ENCODE measurements at regions of chr16 and their contacts with region 1.

Region 1: GRCh38 chr16:67928561-67929364 is 2.9 kb downstream of the CTRL start:
- DNase-seq: peak in 1 of 2 experiments; percentile 91
- H3K4me3 ChIP-seq: no peak overlapping the region
- H3K27ac ChIP-seq: no peak overlapping the region
- H3K4me1 ChIP-seq: peaks cover 0 to 8% (median 4%) of the 10 kb centered on the region in 4 experiments; a peak in 5 of 7 replicates
- H3K27me3 ChIP-seq: no peaks in the 10 kb centered on the region
- CTCF ChIP-seq: peak; percentile 96 to 100 (median 96)
- EP300 ChIP-seq: no peak
- POLR2A ChIP-seq: no peak
- RAD21 ChIP-seq: peak; percentile 94

Region 2: GRCh38 chr16:67910158-67910557 is 18.6 kb before region 1 on chr16:
- CTCF ChIA-PET with region 1: interaction called, 74 read pairs
- POLR2A ChIA-PET with region 1: interaction called, 4 read pairs
- DNase-seq: no peak
- H3K4me3 ChIP-seq: no peak overlapping the region
- H3K27ac ChIP-seq: no peak overlapping the region
- H3K4me1 ChIP-seq: peaks cover 0 to 6% (median 3%) of the 10 kb centered on the region in 4 experiments; a peak in 4 of 7 replicates
- H3K27me3 ChIP-seq: no peaks in the 10 kb centered on the region
- CTCF ChIP-seq: no peak
- EP300 ChIP-seq: no peak
- POLR2A ChIP-seq: no peak
- RAD21 ChIP-seq: no peak

Region 3: DNA sequence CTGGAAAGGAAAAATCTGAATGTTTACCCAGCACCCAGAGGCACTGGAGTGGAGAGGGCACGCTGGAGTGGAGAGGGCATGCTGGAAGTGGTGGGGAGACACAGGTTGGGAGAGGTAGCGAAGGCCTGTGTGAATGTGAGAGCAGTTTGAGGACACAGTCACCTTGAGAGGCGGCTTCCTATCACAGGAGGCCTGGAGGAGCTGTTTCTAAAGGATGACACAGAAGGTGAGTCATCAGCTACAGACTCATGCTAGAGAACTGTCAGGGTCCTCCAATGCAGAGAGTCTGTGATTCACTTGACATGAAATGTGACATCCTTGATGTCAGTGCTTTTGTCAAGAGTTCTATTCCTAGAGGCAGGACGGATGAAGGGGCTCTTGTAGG is 10.9 kb before region 1 on chr16:
- CTCF ChIA-PET with region 1: interaction called, 58 read pairs
- POLR2A ChIA-PET with region 1: interaction called, 4 read pairs
- DNase-seq: no peak
- H3K4me3 ChIP-seq: no peak overlapping the region
- H3K27ac ChIP-seq: no peak overlapping the region
- H3K4me1 ChIP-seq: peaks cover 0 to 10% (median 4%) of the 10 kb centered on the region in 4 experiments; a peak in 6 of 7 replicates
- H3K27me3 ChIP-seq: no peaks in the 10 kb centered on the region
- CTCF ChIP-seq: no peak
- EP300 ChIP-seq: no peak
- POLR2A ChIP-seq: no peak
- RAD21 ChIP-seq: no peak